Natural killer cell (primary cell): ENCODE measurements at regions of chr9 and their contacts with region 1.

Region 1: DNA sequence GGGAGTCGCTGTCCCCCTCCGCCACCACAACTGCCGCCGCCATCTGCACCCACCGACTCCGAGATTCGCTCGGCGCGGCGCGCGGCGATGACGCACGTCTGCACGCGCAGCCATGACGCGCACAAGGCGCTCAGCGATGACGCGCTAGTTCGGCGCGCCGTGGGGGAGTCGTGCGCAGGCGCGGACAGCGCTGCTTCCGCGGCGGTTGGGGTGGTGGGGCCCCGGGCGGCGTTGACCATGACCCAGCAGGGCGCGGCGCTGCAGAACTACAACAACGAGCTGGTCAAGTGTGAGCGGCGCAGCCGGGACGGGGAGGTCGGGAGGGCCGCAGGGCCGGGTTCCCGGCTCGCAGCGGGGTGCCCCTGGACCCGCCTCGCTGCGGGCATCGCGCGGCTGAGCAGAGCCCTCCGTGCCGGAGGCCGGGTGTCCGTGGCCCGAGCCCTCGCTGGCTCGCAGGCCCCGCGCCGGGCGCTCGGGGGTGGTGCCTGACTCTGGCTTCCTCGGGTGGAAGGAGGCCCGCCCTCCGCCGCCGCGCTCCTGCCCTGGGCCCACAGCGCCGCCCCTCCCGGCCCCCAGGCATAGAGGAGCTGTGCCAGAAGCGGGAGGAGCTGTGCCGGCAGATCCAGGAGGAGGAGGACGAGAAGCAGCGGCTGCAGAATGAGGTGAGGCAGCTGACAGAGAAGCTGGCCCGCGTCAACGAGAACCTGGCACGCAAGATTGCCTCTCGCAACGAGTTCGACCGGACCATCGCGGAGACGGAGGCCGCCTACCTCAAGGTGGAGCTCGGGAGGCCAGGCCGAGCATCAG is at the starts of genes ANAPC2 and SSNA1:
- DNase-seq: peak; percentile 98
- ATAC-seq: peak; percentile 80 to 91 (median 84)
- H3K4me3 ChIP-seq: peak within 1 kb of the TSS; percentile 81
- H3K4me3 Mint-ChIP-seq: peak within 1 kb of the TSS; percentile 96
- H3K27ac ChIP-seq: peak within 1 kb of the TSS; percentile 88
- H3K27ac Mint-ChIP-seq: peak within 1 kb of the TSS; percentile 91 to 97
- H3K4me1 ChIP-seq: peaks cover 43% of the 10 kb centered on the region
- H3K4me1 Mint-ChIP-seq: peaks cover 20 to 44% of the 10 kb centered on the region in 2 donors
- H3K27me3 ChIP-seq: no peaks in the 10 kb centered on the region
- H3K27me3 Mint-ChIP-seq: no peaks in the 10 kb centered on the region
- CTCF ChIP-seq: peak; percentile 38
- total RNA-seq, gene ANAPC2: 146 to 172 (median 171) TPM
- total RNA-seq, gene SSNA1: 45.1 to 53.5 (median 52.2) TPM

Region 2: DNA sequence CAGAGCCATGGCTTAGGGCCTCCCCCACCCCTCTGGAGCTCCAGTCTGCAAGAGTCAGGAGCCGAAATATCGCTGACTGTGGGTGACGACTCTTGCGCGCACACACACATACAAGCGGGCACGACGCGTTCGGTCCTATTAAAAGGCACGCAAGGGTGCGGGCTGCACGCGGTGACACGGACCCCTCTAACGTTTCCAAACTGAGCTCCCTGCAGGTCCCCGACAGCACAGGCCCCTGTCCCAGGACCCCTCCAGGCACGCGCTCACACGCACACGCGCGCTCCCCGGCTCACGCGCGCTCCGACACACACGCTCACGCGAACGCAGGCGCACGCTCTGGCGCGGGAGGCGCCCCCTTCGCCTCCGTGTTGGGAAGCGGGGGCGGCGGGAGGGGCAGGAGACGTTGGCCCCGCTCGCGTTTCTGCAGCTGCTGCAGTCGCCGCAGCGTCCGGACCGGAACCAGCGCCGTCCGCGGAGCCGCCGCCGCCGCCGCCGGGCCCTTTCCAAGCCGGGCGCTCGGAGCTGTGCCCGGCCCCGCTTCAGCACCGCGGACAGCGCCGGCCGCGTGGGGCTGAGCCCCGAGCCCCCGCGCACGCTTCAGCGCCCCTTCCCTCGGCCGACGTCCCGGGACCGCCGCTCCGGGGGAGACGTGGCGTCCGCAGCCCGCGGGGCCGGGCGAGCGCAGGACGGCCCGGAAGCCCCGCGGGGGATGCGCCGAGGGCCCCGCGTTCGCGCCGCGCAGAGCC is 49.8 kb before region 1 on chr9 and contains the start of gene GRIN1:
- intact Hi-C with region 1: no loop called
- DNase-seq: peak; percentile 39 to 72
- ATAC-seq: peak; percentile 50 to 92 (median 87)
- H3K4me3 ChIP-seq: no peak within 1 kb of the TSS
- H3K4me3 Mint-ChIP-seq: no peak within 1 kb of the TSS
- H3K27ac ChIP-seq: no peak within 1 kb of the TSS
- H3K27ac Mint-ChIP-seq: no peak within 1 kb of the TSS
- H3K4me1 ChIP-seq: peaks cover 4% of the 10 kb centered on the region
- H3K4me1 Mint-ChIP-seq: peaks cover 0 to 6% of the 10 kb centered on the region in 2 donors
- H3K27me3 ChIP-seq: peaks cover 31% of the 10 kb centered on the region
- H3K27me3 Mint-ChIP-seq: peaks cover 15 to 31% of the 10 kb centered on the region in 2 donors
- CTCF ChIP-seq: no peak
- total RNA-seq, gene GRIN1: not detected

Region 3: GRCh38 chr9:137200311-137201204 is 11.9 kb after region 1 on chr9 and contains the start of gene TPRN:
- intact Hi-C with region 1: loop called (anchors 1 kb)
- DNase-seq: peak; percentile 98
- ATAC-seq: peak; percentile 92 to 99 (median 94)
- H3K4me3 ChIP-seq: peak within 1 kb of the TSS; percentile 75
- H3K4me3 Mint-ChIP-seq: peak within 1 kb of the TSS; percentile 90
- H3K27ac ChIP-seq: peak within 1 kb of the TSS; percentile 82
- H3K27ac Mint-ChIP-seq: peak within 1 kb of the TSS; percentile 83 to 86
- H3K4me1 ChIP-seq: peaks cover 39% of the 10 kb centered on the region
- H3K4me1 Mint-ChIP-seq: peaks cover 16 to 32% of the 10 kb centered on the region in 2 donors
- H3K27me3 ChIP-seq: no peaks in the 10 kb centered on the region
- H3K27me3 Mint-ChIP-seq: no peaks in the 10 kb centered on the region
- CTCF ChIP-seq: no peak
- total RNA-seq, gene TPRN: 8.2 to 10.6 (median 8.4) TPM